HEK293 (cell line): ENCODE measurements at regions of chr17 and their contacts with region 1.

Region 1: DNA sequence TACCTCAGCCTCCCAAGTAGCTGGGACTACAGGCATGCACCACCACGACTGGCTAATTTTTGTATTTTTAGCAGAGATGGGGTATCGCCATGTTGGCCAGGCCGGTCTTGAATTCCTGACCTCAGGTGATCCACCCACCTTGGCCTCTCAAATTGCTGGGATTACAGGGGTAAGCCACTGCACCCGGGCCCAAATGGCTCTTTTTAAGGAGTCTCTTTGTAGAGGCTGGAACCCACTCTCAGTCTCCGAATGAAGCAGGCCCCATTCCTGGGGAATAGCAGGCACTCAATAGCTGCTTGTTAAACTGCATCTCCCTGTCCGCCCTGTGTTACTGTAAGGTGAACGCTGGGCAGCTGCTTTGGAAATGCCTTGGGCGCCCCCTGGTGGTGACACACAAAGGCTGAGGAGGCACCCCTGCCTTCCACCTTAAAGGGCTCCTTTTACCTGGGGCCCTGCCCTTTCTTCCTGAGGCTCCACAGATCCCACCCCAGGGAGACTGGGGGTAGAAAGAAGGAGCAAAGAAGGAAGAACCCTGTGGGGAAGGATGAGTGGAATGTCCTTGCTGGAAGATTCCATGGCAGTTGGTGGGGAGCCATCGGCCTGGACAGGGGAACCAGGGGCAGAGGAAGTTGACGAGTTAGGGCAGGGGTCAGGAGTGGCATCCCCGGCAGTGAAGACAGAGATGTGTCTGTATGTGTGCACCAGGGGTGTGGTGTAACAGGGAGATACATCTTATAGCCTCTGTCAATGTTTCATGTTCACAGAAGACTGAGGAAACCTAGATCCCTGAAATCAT is 6.1 kb upstream of the SP2 start:
- H3K4me3 ChIP-seq: no peak overlapping the region
- H3K27ac ChIP-seq: no peak overlapping the region
- H3K4me1 ChIP-seq: peaks cover 2% of the 10 kb centered on the region; the same call in 1 of the 2 replicates
- CTCF ChIP-seq: peak; percentile 94

Region 2: DNA sequence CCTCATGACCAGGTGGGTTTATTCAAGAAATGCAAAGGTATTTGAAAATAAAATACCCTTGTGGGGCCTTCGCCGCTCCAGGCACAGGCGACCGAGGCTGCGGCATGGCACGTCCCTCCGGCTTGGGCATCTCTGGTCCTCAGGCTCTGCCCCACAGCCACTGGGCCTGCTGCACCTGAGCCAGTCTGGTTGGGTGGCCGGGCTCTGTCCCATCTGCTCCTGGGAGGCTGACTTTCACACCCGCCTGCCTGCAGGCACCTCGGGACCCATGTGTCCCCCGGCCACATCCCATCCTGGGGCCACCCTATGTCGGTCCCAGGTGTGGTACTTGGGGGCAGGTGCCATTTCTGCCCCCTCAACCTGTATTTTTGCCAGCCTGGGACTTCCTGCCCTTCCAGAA is 89.2 kb before region 1 on chr17:
- CTCF ChIA-PET with region 1: no interaction called
- POLR2A ChIA-PET with region 1: no interaction called
- H3K4me3 ChIP-seq: no peak overlapping the region
- H3K27ac ChIP-seq: no peak overlapping the region
- H3K4me1 ChIP-seq: no peaks in the 10 kb centered on the region
- CTCF ChIP-seq: no peak

Region 3: GRCh38 chr17:47821424-47822391 is 68.2 kb before region 1 on chr17 and contains the start of gene OSBPL7:
- CTCF ChIA-PET with region 1: interaction called, 10 read pairs
- POLR2A ChIA-PET with region 1: interaction called, 9 read pairs
- H3K4me3 ChIP-seq: peak within 1 kb of the TSS; percentile 52
- H3K27ac ChIP-seq: peak within 1 kb of the TSS; percentile 48
- H3K4me1 ChIP-seq: peaks cover 3% of the 10 kb centered on the region
- CTCF ChIP-seq: peak; percentile 92

Region 4: DNA sequence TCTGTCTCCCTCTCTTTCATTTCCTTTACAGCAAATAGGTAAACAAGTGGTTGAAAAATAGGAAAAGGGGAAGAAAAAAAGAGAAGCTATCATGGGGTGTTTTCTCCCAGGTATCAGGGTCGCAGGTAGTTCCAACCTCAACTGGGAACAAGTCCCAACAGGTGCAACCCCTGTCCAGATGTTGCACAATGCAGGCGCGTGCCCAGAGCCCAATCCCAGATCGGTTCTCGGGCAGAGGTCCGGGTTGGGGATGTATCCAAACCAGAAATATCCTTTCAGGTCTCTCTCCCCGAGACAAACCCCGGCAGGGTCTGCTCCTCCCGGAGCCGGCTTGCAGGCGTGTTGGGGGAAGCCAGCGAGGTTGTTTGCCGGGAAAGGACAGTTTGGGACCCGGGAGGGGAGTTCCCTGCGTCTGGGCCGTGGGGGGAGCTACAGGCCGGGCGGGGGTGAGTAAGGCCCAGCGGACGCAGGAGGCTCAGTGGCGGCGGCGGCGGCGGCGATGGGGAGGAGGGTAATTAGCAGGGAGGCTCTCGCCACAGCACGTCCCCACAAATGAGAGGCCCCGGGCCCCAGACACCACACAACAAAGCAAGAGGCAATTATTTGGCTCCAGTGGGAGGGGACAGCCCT is 17.8 kb before region 1 on chr17:
- CTCF ChIA-PET with region 1: interaction called, 28 read pairs
- POLR2A ChIA-PET with region 1: interaction called, 6 read pairs
- H3K4me3 ChIP-seq: no peak overlapping the region
- H3K27ac ChIP-seq: no peak overlapping the region
- H3K4me1 ChIP-seq: no peaks in the 10 kb centered on the region
- CTCF ChIP-seq: no peak

Region 5: GRCh38 chr17:48011405-48012150 is 121.6 kb after region 1 on chr17:
- CTCF ChIA-PET with region 1: interaction called, 33 read pairs
- POLR2A ChIA-PET with region 1: no interaction called
- H3K4me3 ChIP-seq: peak overlapping the region; percentile 27
- H3K27ac ChIP-seq: no peak overlapping the region
- H3K4me1 ChIP-seq: peaks cover 7% of the 10 kb centered on the region
- CTCF ChIP-seq: peak; percentile 78